ENCODE measurements at regions of chr17 and their contacts with region 1.

Region 1: DNA sequence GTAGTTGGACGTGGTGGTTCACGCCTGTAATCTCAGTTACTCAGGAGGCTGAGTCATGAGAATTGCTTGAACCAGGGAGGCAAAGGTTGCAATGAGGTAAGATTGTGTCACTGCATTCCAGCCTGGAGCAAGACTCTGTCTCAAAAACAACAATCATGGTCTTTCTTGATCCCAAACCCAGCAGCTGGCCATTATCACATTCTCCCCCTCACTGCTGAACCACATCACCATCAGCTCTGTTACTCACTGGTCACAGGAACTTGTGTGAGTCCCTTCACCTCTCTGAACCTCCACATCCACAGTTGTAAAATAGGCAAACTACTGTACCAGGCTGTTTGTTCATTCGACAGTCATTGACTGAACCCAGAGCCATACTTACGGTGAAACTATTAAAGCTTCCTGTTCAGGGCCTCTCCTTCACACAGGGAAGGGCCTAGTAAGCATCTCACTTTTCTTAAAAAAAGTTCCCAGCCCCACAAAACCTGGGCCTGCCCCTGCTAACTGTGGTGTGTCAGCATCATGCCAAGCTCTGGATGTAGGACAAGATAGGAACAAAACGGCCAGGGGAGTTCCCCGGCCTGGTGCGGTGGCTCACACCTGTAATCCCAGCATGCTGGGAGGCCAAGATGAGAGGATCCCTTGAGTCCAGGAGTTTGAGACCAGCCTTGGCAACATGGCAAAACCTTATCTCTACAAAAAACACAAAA is 104.7 kb downstream of the COPRS start:
- DNase-seq: no peak
- ATAC-seq: no peak
- H3K4me3 ChIP-seq: no peak overlapping the region
- H3K27ac ChIP-seq: no peak overlapping the region
- H3K4me1 ChIP-seq: peaks cover 0 to 2% of the 10 kb centered on the region in 2 donors
- H3K27me3 ChIP-seq: no peaks in the 10 kb centered on the region
- CTCF ChIP-seq: no peak
- POLR2A ChIP-seq: no peak

Region 2: GRCh38 chr17:31654936-31655335 is 99.5 kb before region 1 on chr17:
- in situ Hi-C with region 1: loop called in 1 of 4 experiments (anchors 25 kb)
- intact Hi-C with region 1: no loop called
- DNase-seq: no peak
- ATAC-seq: no peak
- H3K4me3 ChIP-seq: no peak overlapping the region
- H3K27ac ChIP-seq: no peak overlapping the region
- H3K4me1 ChIP-seq: no peaks in the 10 kb centered on the region
- H3K27me3 ChIP-seq: no peaks in the 10 kb centered on the region
- CTCF ChIP-seq: no peak
- POLR2A ChIP-seq: no peak

Region 3: DNA sequence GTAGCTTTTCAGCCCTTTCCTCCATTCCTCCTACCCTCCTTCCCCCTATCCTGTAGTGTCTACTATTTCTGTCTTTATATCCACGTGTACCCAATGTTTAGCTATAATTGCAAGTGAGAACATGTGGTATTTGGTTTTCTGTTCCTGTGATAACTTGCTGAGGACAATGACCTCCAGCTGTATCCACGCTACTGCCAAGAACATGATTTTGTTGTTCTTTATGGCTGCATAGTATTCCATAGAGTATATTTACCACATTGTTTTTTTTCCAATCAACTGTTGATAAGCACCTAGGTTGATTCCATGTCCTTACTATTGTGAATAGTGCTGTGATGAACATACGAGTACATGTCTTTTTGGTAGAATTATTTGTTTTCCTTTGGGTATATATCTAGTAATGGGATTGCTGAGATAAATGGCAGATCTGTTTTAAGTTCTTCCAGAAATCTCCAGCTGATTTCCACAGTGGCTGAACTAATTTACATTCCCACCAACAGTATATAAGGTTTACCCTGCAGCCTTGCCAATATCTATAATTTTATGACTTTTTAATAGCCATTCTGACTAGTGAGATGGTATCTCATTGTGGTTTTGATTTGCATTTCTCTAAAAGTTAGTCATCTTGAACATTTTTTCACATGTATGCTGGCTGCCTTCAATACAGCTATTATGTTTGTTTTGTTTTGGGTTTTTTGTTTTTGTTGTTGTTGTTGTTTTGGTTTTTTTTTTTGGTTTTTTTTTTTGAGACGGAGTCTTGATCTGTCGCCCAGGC is 115.6 kb after region 1 on chr17:
- in situ Hi-C with region 1: no loop called
- intact Hi-C with region 1: no loop called
- DNase-seq: no peak
- ATAC-seq: no peak
- H3K4me3 ChIP-seq: no peak overlapping the region
- H3K27ac ChIP-seq: no peak overlapping the region
- H3K4me1 ChIP-seq: no peaks in the 10 kb centered on the region
- H3K27me3 ChIP-seq: no peaks in the 10 kb centered on the region
- CTCF ChIP-seq: no peak
- POLR2A ChIP-seq: no peak

Measured in gastrocnemius medialis (tissue), 4 donors.